ENCODE measurements at regions of chr12 and their contacts with region 1.

Region 1: DNA sequence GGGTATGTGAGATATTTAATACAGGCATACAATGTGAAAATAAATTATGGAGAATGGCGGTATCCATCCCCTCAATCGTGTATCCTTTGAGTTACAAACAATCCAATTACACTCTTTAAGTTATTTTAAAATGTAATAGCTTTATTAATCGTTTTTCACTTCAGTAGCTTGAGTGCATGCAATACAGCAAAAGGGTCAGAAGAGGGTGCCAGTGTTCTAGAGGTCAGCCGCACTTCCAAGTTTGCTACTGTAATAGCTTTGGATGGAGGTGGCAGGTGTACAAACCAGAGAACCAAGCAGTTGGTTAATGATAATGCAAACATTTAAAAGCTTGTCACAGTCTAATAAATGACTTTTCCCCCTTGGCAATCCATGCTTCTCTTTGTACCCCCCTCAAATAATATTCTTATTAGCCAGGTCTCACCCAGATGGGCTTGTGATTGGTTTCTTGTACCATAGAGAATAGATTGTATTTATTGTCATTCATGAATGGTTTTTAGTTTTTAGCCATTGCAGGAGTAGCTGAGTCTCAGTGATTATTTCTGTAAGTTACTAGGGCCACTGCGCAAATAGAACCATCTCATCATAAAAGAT is 127.0 kb downstream of the ERC1 start:
- DNase-seq: peak; percentile 65 to 71
- H3K4me3 ChIP-seq: no peak overlapping the region
- H3K27ac ChIP-seq: no peak overlapping the region
- H3K4me1 ChIP-seq: peaks cover 42% of the 10 kb centered on the region
- H3K27me3 ChIP-seq: no peaks in the 10 kb centered on the region
- CTCF ChIP-seq: peak; percentile 99

Region 2: DNA sequence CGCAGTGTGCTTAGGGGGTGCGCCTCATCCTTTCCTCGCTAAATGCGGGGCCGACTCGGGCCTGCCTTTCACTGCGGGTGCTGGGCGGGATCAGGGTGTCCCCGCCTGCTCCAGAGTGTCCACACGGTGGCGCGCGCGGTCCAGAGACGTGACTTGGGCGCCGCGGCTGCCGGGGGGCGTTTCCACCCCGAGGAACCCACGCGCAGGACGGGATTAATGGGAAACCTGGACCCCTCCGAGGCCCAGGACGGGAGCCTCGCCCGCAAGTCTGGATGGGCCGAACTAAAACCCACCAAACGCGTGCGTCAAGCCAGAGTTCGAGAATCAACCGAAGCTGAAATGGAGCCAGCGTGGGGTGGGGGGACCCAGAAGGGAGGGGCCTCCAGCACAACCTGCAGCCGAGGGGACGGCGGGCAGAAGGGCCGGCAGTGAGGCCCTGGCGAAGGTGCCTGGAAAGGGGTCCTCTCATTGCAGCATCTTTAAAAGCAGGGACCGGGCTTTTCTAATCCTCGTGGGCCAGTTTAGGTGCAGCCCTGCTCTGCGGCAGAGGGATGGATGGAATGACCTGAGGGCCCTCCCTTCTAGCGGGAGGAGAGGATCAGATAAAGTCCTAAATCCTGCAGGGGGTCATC is 548.1 kb before region 1 on chr12:
- CTCF ChIA-PET with region 1: no interaction called
- POLR2A ChIA-PET with region 1: interaction called, 3 read pairs
- intact Hi-C with region 1: loop called (anchors 2 kb)
- DNase-seq: peak; percentile 61 to 90
- H3K4me3 ChIP-seq: peak overlapping the region; percentile 77
- H3K27ac ChIP-seq: peak overlapping the region; percentile 84; the same call in 1 of the 2 replicates
- H3K4me1 ChIP-seq: peaks cover 25% of the 10 kb centered on the region
- H3K27me3 ChIP-seq: no peaks in the 10 kb centered on the region
- CTCF ChIP-seq: peak; percentile 94

Region 3: GRCh38 chr12:1093166-1093751 is 24.8 kb before region 1 on chr12:
- CTCF ChIA-PET with region 1: interaction called, 13 read pairs
- POLR2A ChIA-PET with region 1: no interaction called
- intact Hi-C with region 1: no loop called
- DNase-seq: peak; percentile 47
- H3K4me3 ChIP-seq: no peak overlapping the region
- H3K27ac ChIP-seq: no peak overlapping the region
- H3K4me1 ChIP-seq: no peaks in the 10 kb centered on the region
- H3K27me3 ChIP-seq: no peaks in the 10 kb centered on the region
- CTCF ChIP-seq: peak; percentile 95

Region 4: GRCh38 chr12:1474041-1474573 is 356.0 kb after region 1 on chr12:
- CTCF ChIA-PET with region 1: interaction called, 15 read pairs
- POLR2A ChIA-PET with region 1: no interaction called
- intact Hi-C with region 1: loop called (anchors 1 kb)
- DNase-seq: peak; percentile 55 to 80
- H3K4me3 ChIP-seq: no peak overlapping the region
- H3K27ac ChIP-seq: peak overlapping the region; percentile 33
- H3K4me1 ChIP-seq: peaks cover 34% of the 10 kb centered on the region
- H3K27me3 ChIP-seq: no peaks in the 10 kb centered on the region
- CTCF ChIP-seq: no peak

Region 5: GRCh38 chr12:1517007-1517406 is 398.9 kb after region 1 on chr12:
- CTCF ChIA-PET with region 1: interaction called, 5 read pairs
- POLR2A ChIA-PET with region 1: no interaction called
- intact Hi-C with region 1: loop called (anchors 5 kb)
- DNase-seq: peak in 1 of 2 experiments; percentile 77
- H3K4me3 ChIP-seq: no peak overlapping the region
- H3K27ac ChIP-seq: no peak overlapping the region
- H3K4me1 ChIP-seq: peaks cover 28% of the 10 kb centered on the region
- H3K27me3 ChIP-seq: no peaks in the 10 kb centered on the region
- CTCF ChIP-seq: peak; percentile 51; the same call in 1 of the 2 replicates

Region 6: DNA sequence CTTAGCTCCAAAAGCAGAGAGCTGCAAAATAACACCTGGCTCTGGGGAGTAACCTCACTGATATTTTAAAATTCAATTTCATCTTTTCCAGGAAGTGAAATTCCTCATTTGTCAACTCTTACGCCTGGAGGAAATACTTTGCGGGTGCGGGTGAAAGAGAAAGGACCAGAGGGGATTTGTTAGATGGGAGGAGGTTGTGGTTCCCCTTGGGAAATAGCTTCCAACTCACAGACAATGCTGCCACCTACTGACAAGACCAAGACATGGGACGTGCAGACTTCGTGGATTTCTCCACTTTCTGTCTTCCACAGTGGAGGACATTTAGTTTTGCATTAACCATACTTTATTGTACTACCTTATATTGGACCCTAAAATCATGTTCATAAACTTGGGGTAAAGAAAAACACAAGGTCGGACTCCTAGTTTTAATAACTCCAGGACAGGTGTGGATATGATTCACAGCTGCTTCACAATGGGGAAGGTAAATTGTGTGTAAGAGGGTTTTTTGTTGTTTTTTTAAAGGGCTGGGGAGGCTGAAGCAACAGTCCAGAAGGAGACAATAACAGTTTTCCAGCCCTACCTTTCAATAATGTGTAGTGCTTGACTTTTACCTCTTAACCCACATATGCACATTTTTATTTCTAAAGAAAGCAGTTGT is 465.5 kb after region 1 on chr12:
- CTCF ChIA-PET with region 1: interaction called, 63 read pairs
- POLR2A ChIA-PET with region 1: no interaction called
- intact Hi-C with region 1: loop called (anchors 1 kb)
- DNase-seq: peak; percentile 73 to 77
- H3K4me3 ChIP-seq: peak overlapping the region; percentile 32; the same call in 1 of the 2 replicates
- H3K27ac ChIP-seq: no peak overlapping the region
- H3K4me1 ChIP-seq: peaks cover 6% of the 10 kb centered on the region
- H3K27me3 ChIP-seq: no peaks in the 10 kb centered on the region
- CTCF ChIP-seq: peak; percentile 98

Region 7: DNA sequence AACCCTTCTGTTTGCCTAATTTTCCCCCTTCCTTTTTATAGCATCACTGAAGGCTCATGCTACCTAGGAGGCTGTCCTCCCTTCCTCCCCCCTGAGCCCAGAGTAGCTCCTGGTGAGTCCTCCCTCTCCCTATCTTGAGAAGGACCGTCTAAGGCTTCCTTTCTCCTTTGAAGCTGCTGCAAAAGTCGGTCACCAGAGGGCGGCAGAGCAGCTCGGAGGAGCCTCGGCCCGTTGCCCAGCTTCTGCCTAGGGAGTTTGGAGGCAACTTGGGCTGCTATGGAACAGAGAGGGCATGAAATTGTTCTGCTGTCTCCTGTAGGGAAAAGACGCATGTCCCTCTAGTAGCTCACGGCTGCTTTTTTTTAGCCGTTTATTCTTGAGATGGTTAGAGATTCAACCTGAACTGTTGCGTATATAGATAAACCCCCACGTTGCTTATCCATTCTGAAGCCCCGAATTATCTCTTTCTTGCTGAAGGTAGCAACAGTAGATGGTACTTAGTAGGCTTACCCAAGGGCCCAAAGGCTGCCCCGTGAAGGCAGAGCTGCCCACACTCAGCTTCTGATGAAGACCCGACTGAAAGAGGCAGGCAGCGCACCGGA is 516.6 kb after region 1 on chr12:
- CTCF ChIA-PET with region 1: interaction called, 23 read pairs
- POLR2A ChIA-PET with region 1: no interaction called
- intact Hi-C with region 1: no loop called
- DNase-seq: peak; percentile 50 to 63
- H3K4me3 ChIP-seq: no peak overlapping the region
- H3K27ac ChIP-seq: no peak overlapping the region
- H3K4me1 ChIP-seq: no peaks in the 10 kb centered on the region
- H3K27me3 ChIP-seq: peaks cover 52% of the 10 kb centered on the region
- CTCF ChIP-seq: peak; percentile 90

Measured in PC-9 (cell line).